GM10248 (cell line): ENCODE measurements at regions of chr5 and their contacts with region 1.

Region 1: DNA sequence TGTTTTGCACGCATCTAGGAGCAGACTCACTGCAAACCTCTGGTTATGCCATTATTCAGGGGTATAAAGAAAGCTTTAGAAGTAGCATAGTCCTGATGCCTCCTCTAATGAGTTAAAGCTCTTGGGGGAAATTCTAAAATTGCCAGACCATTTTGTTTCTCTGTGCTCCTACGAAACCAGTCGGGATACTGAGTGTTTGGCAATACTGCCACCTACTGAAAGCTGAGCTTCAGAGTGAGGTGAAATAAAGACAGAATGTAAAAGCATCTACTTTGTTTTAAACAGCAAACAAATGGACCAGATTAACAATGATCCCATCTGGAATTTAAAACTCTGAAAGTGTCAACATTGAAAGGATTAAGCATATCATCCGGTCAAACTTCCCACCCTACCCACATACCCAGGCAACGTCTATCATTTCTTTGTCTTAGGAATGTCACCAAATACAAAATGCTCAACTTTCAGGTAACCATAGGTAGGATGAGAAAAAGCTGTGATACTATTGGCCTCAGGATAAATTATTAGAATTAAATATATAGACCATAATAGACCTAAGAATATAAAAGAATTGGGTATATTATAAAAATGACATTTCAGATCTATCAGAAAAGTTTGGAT is 77.8 kb upstream of the SHISAL2B start:
- DNase-seq: no peak
- CTCF ChIP-seq: peak; percentile 70

Region 2: DNA sequence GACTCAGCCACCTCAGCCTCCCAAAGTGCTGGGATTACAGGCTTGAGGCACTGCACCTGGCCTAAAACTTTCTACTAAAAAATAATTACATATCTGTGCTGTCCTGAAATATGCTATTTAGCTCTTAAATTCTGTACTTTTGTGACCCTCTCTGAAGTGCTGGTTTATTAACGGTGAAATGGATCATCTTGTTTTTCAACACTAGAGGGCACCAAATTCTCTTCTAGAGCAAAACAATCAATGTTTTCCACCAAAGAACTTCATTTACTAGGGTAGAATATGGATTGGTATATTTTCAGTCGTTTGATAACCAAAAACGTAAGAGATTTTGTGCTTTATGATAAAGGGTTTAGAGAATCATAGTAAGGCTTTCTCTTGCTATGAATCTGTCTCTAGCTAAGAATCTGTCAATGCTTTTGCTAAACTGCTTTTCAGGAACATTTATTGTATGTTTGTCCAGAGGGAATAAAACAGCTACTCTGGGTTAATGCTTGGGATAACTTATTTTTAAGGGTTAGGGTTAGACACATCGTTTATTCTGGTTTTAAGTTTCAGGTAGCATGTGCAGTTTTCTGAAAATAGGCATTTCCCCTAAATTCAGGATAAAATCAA is 383.2 kb before region 1 on chr5:
- CTCF ChIA-PET with region 1: interaction called, 65 read pairs
- POLR2A ChIA-PET with region 1: no interaction called
- DNase-seq: peak; percentile 56
- CTCF ChIP-seq: peak; percentile 66

Region 3: GRCh38 chr5:64599226-64599625 is 13.2 kb before region 1 on chr5:
- CTCF ChIA-PET with region 1: interaction called, 11 read pairs
- POLR2A ChIA-PET with region 1: no interaction called
- DNase-seq: no peak
- CTCF ChIP-seq: no peak

Region 4: DNA sequence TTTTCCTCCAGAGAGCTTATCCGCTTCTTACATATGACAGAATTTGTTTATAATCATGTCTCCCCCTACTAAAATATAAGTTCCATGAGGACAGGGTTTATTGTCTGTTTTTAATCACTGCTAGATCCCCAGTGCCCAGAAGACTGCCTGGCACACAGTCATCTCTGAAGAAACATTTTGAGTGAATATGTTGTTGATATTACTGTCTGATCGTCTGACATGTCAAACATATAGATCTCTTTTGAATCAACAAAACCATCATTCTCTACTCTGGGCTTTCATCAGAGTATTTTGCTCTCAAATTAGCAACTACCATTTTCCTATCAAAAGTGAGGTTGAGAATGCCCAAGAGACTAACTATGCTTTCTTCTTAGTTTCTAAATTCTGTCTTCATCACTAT is 10.5 kb after region 1 on chr5:
- CTCF ChIA-PET with region 1: interaction called, 14 read pairs
- POLR2A ChIA-PET with region 1: no interaction called
- DNase-seq: no peak
- CTCF ChIP-seq: no peak